Activated CD4-positive, alpha-beta T cell treated with anti-CD3 and anti-CD28 coated beads for 36 hours (primary cell): ENCODE measurements at regions of chr1 and their contacts with region 1.

Region 1: GRCh38 chr1:9292361-9293240 is at the start of gene SPSB1:
- DNase-seq: peak; percentile 84
- ATAC-seq: peak; percentile 40
- H3K4me3 Mint-ChIP-seq: peak within 1 kb of the TSS; percentile 39
- H3K27ac Mint-ChIP-seq: no peak within 1 kb of the TSS
- H3K4me1 Mint-ChIP-seq: peaks cover 11% of the 10 kb centered on the region
- H3K27me3 Mint-ChIP-seq: no peaks in the 10 kb centered on the region
- total RNA-seq, gene SPSB1: 5.7 to 6.8 TPM

Region 2: DNA sequence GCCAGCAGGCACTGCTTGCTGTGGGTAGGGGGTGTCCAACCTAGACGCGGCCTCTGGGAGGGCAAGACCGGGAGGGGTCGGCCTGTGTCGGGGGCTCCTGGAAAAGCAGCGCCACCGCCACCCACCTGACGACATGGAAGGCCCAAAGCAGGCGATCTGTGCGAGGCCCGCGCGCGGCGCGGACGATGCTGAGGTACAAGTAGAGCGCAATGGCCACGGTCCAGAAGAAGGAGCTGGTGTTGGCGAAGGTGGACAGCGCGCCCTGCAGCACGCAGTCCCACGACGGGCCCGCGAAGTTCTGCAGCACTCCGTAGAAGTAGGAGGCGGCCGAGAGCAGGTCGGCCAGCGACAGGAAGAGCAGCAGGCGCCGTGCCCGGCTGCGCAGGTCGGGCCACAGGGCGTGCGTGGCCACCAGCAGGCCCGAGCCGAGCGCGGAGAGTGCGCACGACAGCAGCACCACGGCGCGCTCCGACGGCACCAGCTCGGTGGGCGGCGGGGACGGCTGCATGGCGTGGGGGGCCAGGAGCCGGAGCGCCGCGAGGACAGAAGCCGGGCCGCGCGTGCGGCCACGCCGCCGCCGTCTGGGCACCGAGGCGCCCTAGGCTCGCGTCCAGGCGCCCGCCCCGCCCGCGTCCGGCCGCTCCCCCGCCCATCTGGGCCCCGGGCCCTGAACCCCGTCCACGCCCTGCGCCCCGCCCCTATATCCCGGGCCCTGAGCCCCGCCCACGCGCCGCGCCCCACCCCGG is 163.9 kb before region 1 on chr1 and contains the start of gene GPR157:
- CTCF ChIA-PET with region 1: no interaction called
- POLR2A ChIA-PET with region 1: no interaction called
- intact Hi-C with region 1: loop called in 1 of 2 experiments (anchors 1 kb)
- DNase-seq: peak; percentile 93
- ATAC-seq: peak; percentile 84
- H3K4me3 Mint-ChIP-seq: peak within 1 kb of the TSS; percentile 83
- H3K27ac Mint-ChIP-seq: peak within 1 kb of the TSS; percentile 67
- H3K4me1 Mint-ChIP-seq: peaks cover 37% of the 10 kb centered on the region
- H3K27me3 Mint-ChIP-seq: no peaks in the 10 kb centered on the region
- total RNA-seq, gene GPR157: 2.7 to 3.6 TPM

Region 3: DNA sequence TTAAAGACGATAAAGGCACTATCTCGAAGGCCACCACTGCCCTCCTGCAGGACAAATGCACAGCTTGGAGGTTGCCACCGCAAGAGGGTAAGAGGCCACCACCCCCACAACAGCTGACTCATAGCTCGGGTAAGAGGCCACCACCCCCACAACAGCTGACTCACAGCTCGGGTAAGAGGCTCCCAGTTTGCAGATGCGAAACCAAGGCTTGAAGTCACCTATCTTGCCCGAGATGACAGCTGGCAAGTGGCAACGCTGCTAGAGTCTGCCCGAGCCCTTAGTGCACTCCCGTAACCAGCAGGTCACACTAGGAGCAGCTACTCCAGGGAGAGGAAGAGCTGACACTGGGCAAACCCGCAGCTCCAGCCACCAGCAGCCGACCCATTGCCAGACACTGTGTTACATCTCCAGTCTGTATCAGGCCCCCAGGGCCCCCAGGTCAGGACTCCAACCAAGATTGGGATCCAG is 17.0 kb before region 1 on chr1:
- CTCF ChIA-PET with region 1: interaction called, 21 read pairs
- POLR2A ChIA-PET with region 1: interaction called, 3 read pairs
- intact Hi-C with region 1: loop called (anchors 1 to 2 kb)
- DNase-seq: peak; percentile 93
- ATAC-seq: peak; percentile 89
- H3K4me3 Mint-ChIP-seq: peak overlapping the region; percentile 2
- H3K27ac Mint-ChIP-seq: peak overlapping the region; percentile 47
- H3K4me1 Mint-ChIP-seq: peaks cover 33% of the 10 kb centered on the region
- H3K27me3 Mint-ChIP-seq: no peaks in the 10 kb centered on the region

Region 4: DNA sequence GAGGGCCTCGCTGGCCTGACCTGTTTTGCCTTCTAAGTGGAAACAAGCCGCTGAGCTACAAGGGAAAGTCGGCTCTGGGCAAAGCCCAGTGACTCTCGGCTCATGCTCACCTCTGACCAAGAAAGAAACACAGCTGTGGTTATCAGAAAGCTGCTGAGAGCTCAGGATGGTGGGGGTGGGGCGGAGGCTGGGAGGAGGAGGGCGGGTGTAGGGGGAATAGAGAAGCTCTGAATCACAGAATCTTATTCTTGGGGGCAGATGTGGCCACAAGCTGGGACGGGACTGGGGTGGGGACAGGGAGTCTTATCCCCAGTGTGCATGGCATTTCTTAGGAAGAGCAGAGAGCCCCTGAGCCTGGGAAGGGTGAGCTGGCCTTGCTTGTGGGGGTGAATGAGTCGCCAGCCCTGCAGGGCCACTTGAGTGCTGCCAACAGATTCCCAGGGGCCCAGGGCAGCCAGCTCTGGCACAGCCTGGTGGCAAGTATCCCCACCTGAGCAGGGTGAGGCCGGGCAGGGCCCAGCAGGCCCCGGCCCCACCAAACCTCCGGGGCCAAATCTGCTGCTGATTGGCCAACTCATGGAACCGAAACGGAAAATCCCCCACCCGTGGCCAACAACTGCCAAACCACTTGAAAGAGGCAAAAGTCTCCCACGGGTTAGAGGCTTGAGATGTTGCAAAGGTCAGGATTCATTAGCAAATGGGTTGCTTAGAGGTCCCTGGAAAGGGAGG is 120.7 kb after region 1 on chr1:
- CTCF ChIA-PET with region 1: interaction called, 8 read pairs
- POLR2A ChIA-PET with region 1: no interaction called
- intact Hi-C with region 1: loop called (anchors 1 to 5 kb)
- DNase-seq: peak; percentile 90
- ATAC-seq: peak; percentile 89
- H3K4me3 Mint-ChIP-seq: no peak overlapping the region
- H3K27ac Mint-ChIP-seq: peak overlapping the region; percentile 55
- H3K4me1 Mint-ChIP-seq: peaks cover 50% of the 10 kb centered on the region
- H3K27me3 Mint-ChIP-seq: peaks cover 3% of the 10 kb centered on the region

Region 5: GRCh38 chr1:9466780-9467758 is 174.5 kb after region 1 on chr1:
- CTCF ChIA-PET with region 1: interaction called, 10 read pairs
- POLR2A ChIA-PET with region 1: interaction called, 3 read pairs
- intact Hi-C with region 1: no loop called
- DNase-seq: no peak
- ATAC-seq: no peak
- H3K4me3 Mint-ChIP-seq: no peak overlapping the region
- H3K27ac Mint-ChIP-seq: no peak overlapping the region
- H3K4me1 Mint-ChIP-seq: no peaks in the 10 kb centered on the region
- H3K27me3 Mint-ChIP-seq: peaks cover 19% of the 10 kb centered on the region

Region 6: GRCh38 chr1:9588551-9589143 is 296.0 kb after region 1 on chr1 and contains the start of gene TMEM201:
- CTCF ChIA-PET with region 1: no interaction called
- POLR2A ChIA-PET with region 1: no interaction called
- intact Hi-C with region 1: loop called in 1 of 2 experiments (anchors 1 kb)
- DNase-seq: peak; percentile 97
- ATAC-seq: peak; percentile 92
- H3K4me3 Mint-ChIP-seq: peak within 1 kb of the TSS; percentile 80
- H3K27ac Mint-ChIP-seq: peak within 1 kb of the TSS; percentile 79
- H3K4me1 Mint-ChIP-seq: peaks cover 26% of the 10 kb centered on the region
- H3K27me3 Mint-ChIP-seq: no peaks in the 10 kb centered on the region
- total RNA-seq, gene TMEM201: 14.6 to 15.1 TPM